ENCODE measurements at regions of chr6 and their contacts with region 1.

Region 1: DNA sequence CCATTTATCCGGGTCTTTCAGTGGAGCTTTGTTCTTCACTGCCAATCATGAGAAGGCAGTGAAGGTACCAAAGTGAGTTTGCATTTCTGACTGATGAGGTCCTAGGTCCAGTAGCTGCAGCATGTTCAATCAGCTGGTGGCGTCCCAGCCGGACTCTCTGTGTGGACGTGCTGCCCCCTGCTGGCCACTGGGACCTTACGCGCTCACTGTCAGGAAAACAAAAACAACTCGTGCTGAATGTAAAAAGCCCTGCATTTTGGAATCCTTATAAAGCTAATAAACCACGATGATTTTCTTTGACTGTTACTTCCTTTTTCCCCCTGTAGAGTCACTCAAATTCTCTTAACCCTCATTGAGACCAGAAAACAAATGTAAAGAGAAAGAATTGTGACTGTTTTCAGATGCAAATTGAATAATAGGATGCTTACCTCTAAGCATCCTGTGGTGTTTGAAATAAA is 4.9 kb upstream of the CD24 start:
- H3K4me3 Mint-ChIP-seq: no peak overlapping the region
- H3K27ac Mint-ChIP-seq: no peak overlapping the region
- H3K4me1 Mint-ChIP-seq: peaks cover 1% of the 10 kb centered on the region
- H3K27me3 Mint-ChIP-seq: peaks cover 47% of the 10 kb centered on the region

Region 2: DNA sequence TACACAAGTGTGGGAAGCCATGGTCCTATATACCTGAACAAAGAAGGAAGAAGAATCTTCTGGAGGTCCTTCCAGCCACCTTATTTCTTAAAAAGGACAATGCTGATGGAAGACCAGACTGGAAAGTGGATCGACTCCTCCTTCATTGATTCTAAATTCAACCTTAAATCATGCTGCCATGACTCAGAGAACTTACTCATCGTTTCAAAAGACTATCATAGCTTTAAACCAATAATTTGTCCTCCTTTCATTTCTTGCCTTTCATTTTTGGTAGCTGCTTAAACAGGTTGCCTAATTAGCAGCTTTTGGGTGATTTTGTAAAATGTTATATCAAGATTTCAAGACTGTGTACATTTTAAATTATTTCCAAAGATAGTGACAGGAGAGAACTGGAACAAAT is 410.9 kb before region 1 on chr6:
- intact Hi-C with region 1: loop called (anchors 2 kb)
- H3K4me3 Mint-ChIP-seq: no peak overlapping the region
- H3K27ac Mint-ChIP-seq: no peak overlapping the region
- H3K4me1 Mint-ChIP-seq: peaks cover 24% of the 10 kb centered on the region
- H3K27me3 Mint-ChIP-seq: no peaks in the 10 kb centered on the region

Region 3: GRCh38 chr6:106608062-106608668 is 371.3 kb before region 1 on chr6:
- intact Hi-C with region 1: loop called (anchors 1 kb)
- H3K4me3 Mint-ChIP-seq: no peak overlapping the region
- H3K27ac Mint-ChIP-seq: no peak overlapping the region
- H3K4me1 Mint-ChIP-seq: no peaks in the 10 kb centered on the region
- H3K27me3 Mint-ChIP-seq: no peaks in the 10 kb centered on the region

Region 4: DNA sequence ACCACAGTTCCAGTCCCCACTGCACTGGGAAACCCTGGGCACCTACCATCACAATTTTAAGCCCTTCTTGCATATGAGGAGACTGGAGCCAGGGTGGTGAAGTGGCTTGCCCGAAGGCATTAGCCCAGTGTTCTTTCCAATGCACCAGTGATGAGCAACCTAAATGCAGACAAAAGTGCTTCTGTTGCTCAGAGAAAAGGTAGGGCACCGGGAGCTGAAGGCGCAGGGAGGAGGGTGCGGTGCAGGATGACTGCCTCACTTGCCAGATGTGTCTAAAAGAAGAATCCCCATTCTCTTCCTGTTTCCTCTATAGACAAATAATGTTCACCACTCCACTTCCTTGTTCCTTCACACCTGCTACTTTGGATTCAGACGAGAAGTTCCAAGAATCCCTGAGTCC is 263.5 kb before region 1 on chr6:
- intact Hi-C with region 1: no loop called
- H3K4me3 Mint-ChIP-seq: no peak overlapping the region
- H3K27ac Mint-ChIP-seq: no peak overlapping the region
- H3K4me1 Mint-ChIP-seq: no peaks in the 10 kb centered on the region
- H3K27me3 Mint-ChIP-seq: peaks cover 10% of the 10 kb centered on the region

Measured in dendritic cell treated with granulocyte-macrophage colony-stimulating factor and Interleukin-4, amounts not matched to agents 40 ng/mL and 50 ng/mL, for 4 days (primary cell).